CD4-positive, alpha-beta memory T cell (primary cell): ENCODE measurements at regions of chr1 and their contacts with region 1.

Region 1: DNA sequence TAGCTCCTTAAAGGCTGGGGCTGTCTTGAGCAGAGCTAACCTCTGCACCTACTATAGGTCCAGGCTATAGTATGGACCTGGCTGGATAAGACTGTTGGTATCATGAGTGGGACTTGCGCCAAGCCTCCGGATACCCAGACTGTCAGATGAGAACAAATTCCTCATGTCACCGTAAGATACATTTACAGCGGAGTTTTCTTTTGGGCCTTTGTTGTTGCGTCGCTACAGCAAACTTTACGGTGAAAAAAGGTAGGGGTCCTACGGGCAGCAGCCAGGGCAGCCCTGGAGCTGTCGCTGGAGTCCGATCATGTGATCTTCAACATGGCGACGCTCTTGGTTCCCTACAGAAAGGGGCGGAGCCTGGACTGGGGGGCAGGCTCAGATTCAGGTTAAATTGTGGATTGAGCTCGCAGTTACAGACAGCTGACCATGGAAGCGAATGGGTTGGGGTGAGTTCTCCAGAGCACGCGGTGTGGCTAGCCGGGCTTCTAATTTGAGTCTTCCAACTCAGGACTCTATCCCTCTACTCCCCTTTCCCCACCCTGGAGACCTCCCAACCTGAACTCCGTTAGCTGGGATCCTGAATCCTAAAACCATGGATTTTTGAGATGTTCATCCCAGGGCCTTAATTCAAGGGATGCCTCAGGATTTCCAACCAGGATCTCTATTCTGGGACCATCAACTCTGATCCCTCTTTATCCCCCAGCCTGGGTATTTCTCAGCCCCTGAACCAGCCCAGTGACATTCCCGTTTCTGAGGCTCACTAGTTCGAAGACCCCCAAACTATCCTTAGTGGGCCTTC is at the start of gene UROD:
- DNase-seq: peak; percentile 87 to 95 (median 91)
- H3K4me3 ChIP-seq: peak within 1 kb of the TSS; percentile 86 to 98
- H3K4me3 Mint-ChIP-seq: peak within 1 kb of the TSS; percentile 88 to 98 (median 96)
- H3K27ac ChIP-seq: peak within 1 kb of the TSS; percentile 71
- H3K27ac Mint-ChIP-seq: peak within 1 kb of the TSS; percentile 91 to 99 (median 96)
- H3K4me1 ChIP-seq: peaks cover 40% of the 10 kb centered on the region
- H3K4me1 Mint-ChIP-seq: peaks cover 29 to 60% (median 48%) of the 10 kb centered on the region in 4 donors
- H3K27me3 ChIP-seq: no peaks in the 10 kb centered on the region
- H3K27me3 Mint-ChIP-seq: no peaks in the 10 kb centered on the region
- total RNA-seq, gene UROD: 46.0 to 52.0 TPM

Region 2: GRCh38 chr1:44775078-44775929 is 236.7 kb before region 1 on chr1 and contains the start of gene RPS8:
- CTCF ChIA-PET with region 1: interaction called, 5 read pairs
- POLR2A ChIA-PET with region 1: interaction called, 50 read pairs
- intact Hi-C with region 1: no loop called
- DNase-seq: peak; percentile 89 to 92 (median 91)
- H3K4me3 ChIP-seq: peak within 1 kb of the TSS; percentile 87 to 88
- H3K4me3 Mint-ChIP-seq: peak within 1 kb of the TSS; percentile 89 to 98 (median 94)
- H3K27ac ChIP-seq: peak within 1 kb of the TSS; percentile 78
- H3K27ac Mint-ChIP-seq: peak within 1 kb of the TSS; percentile 82 to 99 (median 98)
- H3K4me1 ChIP-seq: peaks cover 25% of the 10 kb centered on the region
- H3K4me1 Mint-ChIP-seq: peaks cover 20 to 56% (median 27%) of the 10 kb centered on the region in 4 donors
- H3K27me3 ChIP-seq: no peaks in the 10 kb centered on the region
- H3K27me3 Mint-ChIP-seq: no peaks in the 10 kb centered on the region
- total RNA-seq, gene RPS8: 2,728 to 2,811 TPM

Region 3: GRCh38 chr1:44807262-44808062 is 204.6 kb before region 1 on chr1 and contains the start of gene DYNLT4:
- CTCF ChIA-PET with region 1: interaction called, 4 read pairs
- POLR2A ChIA-PET with region 1: interaction called, 36 read pairs
- intact Hi-C with region 1: no loop called
- DNase-seq: peak; percentile 91 to 98 (median 91)
- H3K4me3 ChIP-seq: peak within 1 kb of the TSS; percentile 41 to 57
- H3K4me3 Mint-ChIP-seq: peak within 1 kb of the TSS; percentile 74 to 87 (median 80)
- H3K27ac ChIP-seq: peak within 1 kb of the TSS; percentile 98
- H3K27ac Mint-ChIP-seq: peak within 1 kb of the TSS; percentile 98 to 100 (median 99)
- H3K4me1 ChIP-seq: peaks cover 91% of the 10 kb centered on the region
- H3K4me1 Mint-ChIP-seq: peaks cover 57 to 94% (median 73%) of the 10 kb centered on the region in 4 donors
- H3K27me3 ChIP-seq: no peaks in the 10 kb centered on the region
- H3K27me3 Mint-ChIP-seq: no peaks in the 10 kb centered on the region
- total RNA-seq, gene DYNLT4: 0.47 TPM in 1 of 2 experiments, not detected in the other

Region 4: DNA sequence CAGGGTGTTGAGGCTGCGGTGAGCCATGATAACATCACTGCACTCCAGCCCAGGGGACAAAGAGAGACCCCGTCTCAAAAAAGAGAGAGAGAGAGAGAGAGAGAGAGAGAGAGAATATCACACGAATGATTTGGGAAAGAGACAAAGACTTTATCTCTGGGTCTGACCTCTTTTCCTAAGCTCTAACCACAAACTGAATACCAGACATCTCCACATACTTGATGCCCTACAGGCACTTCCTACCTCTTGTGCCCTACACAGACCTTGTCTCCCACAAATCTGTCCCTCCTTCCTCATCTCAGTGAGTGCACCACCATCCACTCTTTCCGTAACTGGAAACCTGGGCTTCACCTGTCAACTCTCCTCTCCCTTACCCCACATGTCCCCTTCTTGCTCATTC is 141.9 kb before region 1 on chr1:
- CTCF ChIA-PET with region 1: no interaction called
- POLR2A ChIA-PET with region 1: no interaction called
- intact Hi-C with region 1: no loop called
- DNase-seq: no peak
- H3K4me3 ChIP-seq: no peak overlapping the region
- H3K4me3 Mint-ChIP-seq: no peak overlapping the region
- H3K27ac ChIP-seq: no peak overlapping the region
- H3K27ac Mint-ChIP-seq: peak overlapping the region in 2 of 7 donors; percentile 19 to 80
- H3K4me1 ChIP-seq: no peaks in the 10 kb centered on the region
- H3K4me1 Mint-ChIP-seq: no peaks in the 10 kb centered on the region
- H3K27me3 ChIP-seq: no peaks in the 10 kb centered on the region
- H3K27me3 Mint-ChIP-seq: no peaks in the 10 kb centered on the region

Region 5: DNA sequence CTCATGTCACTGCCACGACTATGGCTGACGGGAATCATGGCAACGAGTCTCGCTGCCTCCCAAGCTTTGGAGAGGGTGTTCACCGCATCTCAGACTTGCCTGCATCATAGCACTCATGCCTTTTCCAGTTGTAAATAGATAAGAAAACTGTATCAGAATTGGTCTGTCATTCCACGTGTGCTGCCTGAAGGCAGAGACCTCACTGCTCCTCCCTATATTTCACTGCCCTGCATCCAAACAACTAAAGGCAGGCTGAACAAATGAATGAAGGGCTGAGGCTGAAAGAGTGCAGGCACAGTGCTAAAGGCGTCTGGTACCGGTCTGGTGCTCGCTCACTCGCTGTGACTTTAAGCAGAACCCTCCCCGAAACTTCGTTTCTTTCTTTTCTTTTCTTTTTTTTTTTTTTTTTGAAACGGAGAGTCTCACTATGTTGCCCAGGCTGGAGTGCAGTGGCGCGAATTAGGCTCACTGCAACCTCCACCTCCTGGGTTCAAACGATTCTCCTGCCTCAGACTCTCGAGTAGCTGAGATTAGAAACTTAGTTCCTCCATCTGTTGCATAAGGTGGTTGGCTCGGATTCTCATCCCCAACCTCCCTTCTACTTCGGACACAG is 26.2 kb before region 1 on chr1:
- CTCF ChIA-PET with region 1: interaction called, 10 read pairs
- POLR2A ChIA-PET with region 1: interaction called, 80 read pairs
- intact Hi-C with region 1: loop called (anchors 1 kb)
- DNase-seq: no peak
- H3K4me3 ChIP-seq: peak overlapping the region; percentile 67 to 70
- H3K4me3 Mint-ChIP-seq: peak overlapping the region; percentile 98 to 100 (median 99)
- H3K27ac ChIP-seq: peak overlapping the region; percentile 59
- H3K27ac Mint-ChIP-seq: peak overlapping the region; percentile 34 to 99 (median 96)
- H3K4me1 ChIP-seq: peaks cover 11% of the 10 kb centered on the region
- H3K4me1 Mint-ChIP-seq: peaks cover 15 to 26% (median 21%) of the 10 kb centered on the region in 4 donors
- H3K27me3 ChIP-seq: no peaks in the 10 kb centered on the region
- H3K27me3 Mint-ChIP-seq: no peaks in the 10 kb centered on the region

Region 6: DNA sequence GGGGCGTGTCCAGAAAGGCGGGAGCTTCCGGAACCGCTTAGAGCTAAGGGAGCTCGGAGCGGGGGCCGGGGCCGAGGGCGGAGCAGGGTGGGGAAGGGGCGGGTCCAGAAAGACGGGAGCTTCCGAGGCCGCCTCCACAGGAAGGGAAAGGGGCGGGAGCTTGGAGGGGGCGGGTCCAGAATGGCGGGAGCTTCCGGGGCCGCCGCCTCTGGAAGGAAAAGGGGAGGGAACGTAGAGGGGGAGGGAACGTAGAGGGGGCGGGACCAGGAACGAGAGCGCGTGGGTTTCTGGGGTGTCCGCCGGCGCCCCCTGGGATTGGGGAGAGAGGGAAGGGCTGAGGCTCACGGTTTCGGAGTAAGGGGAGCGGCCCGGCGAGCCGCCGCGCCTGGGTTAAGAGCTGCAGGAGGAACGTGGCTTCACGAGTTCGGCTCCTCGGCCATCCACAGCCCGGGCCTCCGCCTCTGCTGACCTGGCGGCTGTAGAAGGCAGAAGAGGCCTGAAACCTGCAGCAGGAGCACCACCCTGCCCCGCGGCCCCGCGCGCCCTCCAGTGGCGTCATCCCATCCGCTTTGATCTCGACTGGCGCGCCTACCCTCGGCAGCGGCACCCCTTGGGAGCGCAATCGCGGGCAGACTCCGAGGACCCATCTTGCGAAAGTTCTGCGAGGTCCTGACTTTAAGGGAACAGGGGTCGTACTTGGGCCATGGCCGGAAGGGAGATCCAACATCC is 291.7 kb after region 1 on chr1:
- CTCF ChIA-PET with region 1: interaction called, 388 read pairs
- POLR2A ChIA-PET with region 1: interaction called, 158 read pairs
- intact Hi-C with region 1: loop called (anchors 1 kb)
- DNase-seq: peak; percentile 94 to 97 (median 95)
- H3K4me3 ChIP-seq: peak overlapping the region; percentile 42 to 86
- H3K4me3 Mint-ChIP-seq: peak overlapping the region; percentile 87 to 94 (median 92)
- H3K27ac ChIP-seq: peak overlapping the region; percentile 85
- H3K27ac Mint-ChIP-seq: peak overlapping the region; percentile 93 to 98 (median 96)
- H3K4me1 ChIP-seq: peaks cover 11% of the 10 kb centered on the region
- H3K4me1 Mint-ChIP-seq: peaks cover 11 to 24% (median 18%) of the 10 kb centered on the region in 4 donors
- H3K27me3 ChIP-seq: no peaks in the 10 kb centered on the region
- H3K27me3 Mint-ChIP-seq: no peaks in the 10 kb centered on the region

Region 7: GRCh38 chr1:45521398-45522323 is 509.6 kb after region 1 on chr1 and contains the start of gene PRDX1:
- CTCF ChIA-PET with region 1: no interaction called
- POLR2A ChIA-PET with region 1: interaction called, 25 read pairs
- intact Hi-C with region 1: no loop called
- DNase-seq: peak; percentile 95
- H3K4me3 ChIP-seq: peak within 1 kb of the TSS; percentile 90 to 94
- H3K4me3 Mint-ChIP-seq: peak within 1 kb of the TSS; percentile 93 to 97 (median 96)
- H3K27ac ChIP-seq: peak within 1 kb of the TSS; percentile 87
- H3K27ac Mint-ChIP-seq: peak within 1 kb of the TSS; percentile 85 to 97 (median 93)
- H3K4me1 ChIP-seq: peaks cover 25% of the 10 kb centered on the region
- H3K4me1 Mint-ChIP-seq: peaks cover 17 to 41% (median 29%) of the 10 kb centered on the region in 4 donors
- H3K27me3 ChIP-seq: no peaks in the 10 kb centered on the region
- H3K27me3 Mint-ChIP-seq: no peaks in the 10 kb centered on the region
- total RNA-seq, gene PRDX1: 130 to 145 TPM